Endothelial cell of umbilical vein (primary cell): ENCODE measurements at regions of chr3 and their contacts with region 1.

Region 1: DNA sequence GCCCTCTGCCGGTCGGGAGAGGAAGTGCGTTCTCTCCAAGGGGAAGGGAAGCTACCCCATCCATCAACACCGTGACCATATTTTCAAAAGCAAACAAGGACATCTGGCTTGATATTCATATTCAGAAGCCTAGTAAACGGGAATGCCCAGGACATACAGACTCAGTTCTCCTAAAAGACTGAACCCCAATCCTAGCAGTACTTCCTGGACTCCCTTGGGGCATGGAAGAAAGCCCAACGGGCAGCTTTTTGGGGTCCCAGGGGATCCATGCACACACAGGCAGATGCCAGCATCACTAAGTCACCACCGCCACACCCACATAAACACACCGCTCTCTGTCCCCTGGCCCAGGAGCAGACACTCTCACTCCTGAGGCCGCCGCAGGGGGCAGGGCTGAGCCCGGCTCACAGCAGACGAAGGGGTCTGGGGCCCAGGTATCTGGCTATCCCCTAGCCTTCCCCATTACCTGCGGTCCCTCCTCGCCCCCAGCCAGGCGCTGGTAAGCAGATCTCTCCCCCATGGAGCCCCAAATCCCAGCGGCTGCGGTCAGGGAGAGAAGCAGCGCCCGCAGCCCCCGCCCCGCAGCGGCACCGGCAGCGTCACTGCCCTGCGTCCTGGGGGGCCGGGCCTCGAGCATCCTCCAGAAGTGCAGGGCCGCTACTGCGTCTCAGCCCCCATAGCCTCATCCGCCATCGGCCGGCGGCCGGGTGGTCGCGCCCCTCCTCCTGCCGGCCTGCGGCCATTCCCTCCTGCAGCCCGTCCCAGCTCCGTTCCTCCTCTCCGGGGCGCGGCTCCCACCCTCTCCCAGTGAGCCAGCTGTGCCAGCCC is 13.4 kb downstream of the TNK2 start:
- DNase-seq: peak; percentile 77
- H3K4me3 ChIP-seq: peak overlapping the region; percentile 62 to 80 (median 76)
- H3K27ac ChIP-seq: peak overlapping the region; percentile 46
- H3K4me1 ChIP-seq: peaks cover 45% of the 10 kb centered on the region
- H3K27me3 ChIP-seq: no peaks in the 10 kb centered on the region
- CTCF ChIP-seq: peak; percentile 78 to 92
- POLR2A ChIP-seq: peak; percentile 42

Region 2: GRCh38 chr3:195873971-195874370 is 21.0 kb before region 1 on chr3:
- CTCF ChIA-PET with region 1: interaction called, 67 read pairs
- POLR2A ChIA-PET with region 1: no interaction called
- dilution Hi-C with region 1: no loop called
- intact Hi-C with region 1: no loop called
- DNase-seq: no peak
- H3K4me3 ChIP-seq: no peak overlapping the region
- H3K27ac ChIP-seq: no peak overlapping the region
- H3K4me1 ChIP-seq: no peaks in the 10 kb centered on the region
- H3K27me3 ChIP-seq: no peaks in the 10 kb centered on the region
- CTCF ChIP-seq: no peak
- POLR2A ChIP-seq: no peak

Region 3: DNA sequence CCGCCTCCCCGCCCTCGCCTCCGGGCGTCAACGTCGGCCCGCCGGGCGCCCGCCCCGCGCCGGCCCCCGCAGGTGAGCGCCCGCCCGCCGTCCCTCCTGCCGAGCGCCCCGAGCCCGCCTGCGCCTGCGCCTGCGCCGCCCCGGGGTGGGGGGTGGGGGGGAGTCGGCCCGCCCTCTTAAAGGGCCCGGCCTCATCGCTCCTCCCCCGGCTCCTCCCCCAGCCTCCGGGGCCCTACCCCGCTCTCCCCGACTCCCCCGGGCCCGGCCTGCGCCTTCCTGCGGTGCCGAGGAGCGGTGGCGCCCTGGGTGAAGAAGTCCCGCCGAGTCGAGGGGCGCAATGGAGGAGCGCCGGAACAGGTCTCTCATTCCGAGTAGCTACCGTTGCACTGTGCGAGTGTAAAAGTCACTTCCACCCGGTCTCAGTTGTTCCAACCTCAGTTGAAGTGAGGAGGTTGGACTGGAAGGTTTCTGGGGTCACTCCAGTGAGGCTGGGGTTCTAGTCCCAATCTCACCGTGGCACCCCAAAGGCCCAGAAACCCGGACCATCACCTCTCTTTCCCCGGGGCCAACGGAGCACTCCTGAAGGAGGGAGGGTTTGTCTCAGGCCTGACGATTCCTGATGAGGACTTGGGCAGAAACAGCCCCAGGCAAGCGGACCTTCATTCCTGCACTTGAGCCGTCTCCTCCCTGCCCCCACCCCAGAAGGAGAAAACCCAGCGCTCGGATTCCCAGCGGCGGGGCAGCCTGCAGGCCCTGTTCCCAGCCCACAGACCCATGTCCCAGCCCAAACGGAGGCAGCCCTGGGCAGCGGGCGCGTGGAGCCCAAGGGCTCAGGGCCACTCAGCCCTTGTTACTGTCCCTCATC is 14.9 kb after region 1 on chr3:
- CTCF ChIA-PET with region 1: interaction called, 147 read pairs
- POLR2A ChIA-PET with region 1: no interaction called
- dilution Hi-C with region 1: no loop called
- intact Hi-C with region 1: loop called (anchors 1 kb)
- DNase-seq: peak; percentile 73
- H3K4me3 ChIP-seq: peak overlapping the region in 2 of 3 experiments; percentile 0 to 54
- H3K27ac ChIP-seq: no peak overlapping the region
- H3K4me1 ChIP-seq: no peaks in the 10 kb centered on the region
- H3K27me3 ChIP-seq: no peaks in the 10 kb centered on the region
- CTCF ChIP-seq: no peak
- POLR2A ChIP-seq: no peak